Pancreas (tissue), 10 donors: ENCODE measurements at regions of chr15 and their contacts with region 1.

Region 1: DNA sequence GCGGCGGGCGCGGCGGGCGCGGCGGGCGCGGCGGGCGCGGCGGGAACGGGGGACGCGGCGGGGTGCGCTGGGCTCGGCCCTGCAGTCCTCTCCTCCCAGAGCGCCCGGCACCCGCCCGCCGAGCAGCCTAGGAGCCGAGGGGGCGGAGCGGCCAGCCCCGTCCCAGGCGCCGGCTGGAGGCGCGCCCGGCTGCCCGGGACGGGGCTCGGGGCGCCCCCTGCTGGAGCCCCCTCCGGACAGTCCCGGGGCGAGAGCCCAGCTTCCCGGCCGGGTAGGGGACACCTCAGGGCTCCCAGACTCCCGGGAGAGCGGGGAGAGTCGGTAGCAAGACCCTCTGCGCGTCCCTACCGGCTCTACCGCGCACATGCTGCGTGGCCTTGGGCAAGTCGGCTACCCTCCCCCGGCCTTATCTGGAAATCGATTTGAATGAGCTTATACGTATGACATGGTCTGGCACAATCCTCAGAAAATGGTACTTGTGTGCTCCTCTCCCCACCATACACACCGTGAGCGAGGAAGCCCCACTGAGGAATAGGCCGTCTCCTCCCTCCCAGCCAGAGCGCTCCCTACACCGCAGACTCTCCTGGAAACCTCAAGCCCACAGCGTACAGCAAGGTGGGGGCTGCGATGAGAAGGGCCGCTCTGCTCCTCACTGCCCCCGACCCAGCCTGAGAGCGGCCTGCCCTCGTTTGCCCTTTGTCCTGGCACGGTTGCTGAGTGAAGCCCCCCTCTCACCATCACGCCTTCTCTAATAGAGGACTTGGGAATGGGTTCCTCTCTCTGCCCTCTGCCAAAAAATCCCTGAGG is at the start of gene DAPK2:
- DNase-seq: peak; percentile 62 to 92 (median 80)
- ATAC-seq: peak; percentile 90 to 92 (median 92)
- H3K4me3 ChIP-seq: peak within 1 kb of the TSS; percentile 21 to 67 (median 33)
- H3K27ac ChIP-seq: peak within 1 kb of the TSS in 1 of 4 donors; percentile 41
- H3K4me1 ChIP-seq: peaks cover 0 to 21% (median 4%) of the 10 kb centered on the region in 3 donors
- H3K27me3 ChIP-seq: no peaks in the 10 kb centered on the region
- CTCF ChIP-seq: peak; percentile 48 to 73 (median 66)
- total RNA-seq, gene DAPK2: 2.1 to 8.0 (median 5.0) TPM

Region 2: GRCh38 chr15:63945007-63945788 is 101.4 kb before region 1 on chr15:
- intact Hi-C with region 1: loop called in 2 of 3 experiments (anchors 10 kb)
- DNase-seq: peak; percentile 61 to 85 (median 74)
- ATAC-seq: peak; percentile 88 to 96 (median 94)
- H3K4me3 ChIP-seq: no peak overlapping the region
- H3K27ac ChIP-seq: peak overlapping the region in 1 of 4 donors; percentile 44
- H3K4me1 ChIP-seq: no peaks in the 10 kb centered on the region
- H3K27me3 ChIP-seq: no peaks in the 10 kb centered on the region
- CTCF ChIP-seq: peak; percentile 78 to 90 (median 88)